ENCODE measurements at regions of chr6 and their contacts with region 1.

Region 1: DNA sequence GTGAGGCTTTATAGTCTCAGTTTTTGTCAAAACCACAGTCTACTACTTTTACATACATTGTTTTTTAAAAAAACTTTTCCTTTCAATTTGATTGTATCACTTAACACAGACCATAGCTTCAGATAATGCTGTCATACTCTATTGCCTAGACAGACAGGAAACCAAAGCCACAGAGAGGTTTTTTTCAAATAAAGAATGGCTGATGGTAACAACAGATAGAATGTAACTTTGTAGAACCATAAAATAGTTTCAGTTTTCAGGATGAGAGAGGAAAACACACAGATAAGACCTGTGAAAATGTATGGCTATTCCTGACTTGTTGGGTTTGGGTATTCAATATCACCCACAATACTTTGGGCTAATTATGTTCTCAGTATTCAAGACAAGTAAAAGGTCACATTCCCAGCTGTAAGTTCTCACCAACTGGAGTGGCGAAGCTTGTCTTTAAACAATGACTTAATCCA is 94.0 kb downstream of the ADGRG6 start:
- DNase-seq: peak in 3 of 14 experiments; percentile 78 to 87 (median 85)
- ATAC-seq: peak; percentile 92
- H3K4me3 ChIP-seq: peak overlapping the region; percentile 7
- H3K4me3 Mint-ChIP-seq: peak overlapping the region; percentile 42
- H3K27ac ChIP-seq: peak overlapping the region in 1 of 2 donors; percentile 79
- H3K27ac Mint-ChIP-seq: peak overlapping the region; percentile 92
- H3K4me1 ChIP-seq: peaks cover 3% of the 10 kb centered on the region
- H3K4me1 Mint-ChIP-seq: peaks cover 50% of the 10 kb centered on the region
- H3K27me3 ChIP-seq: no peaks in the 10 kb centered on the region
- H3K27me3 Mint-ChIP-seq: no peaks in the 10 kb centered on the region
- CTCF ChIP-seq: no peak

Region 2: GRCh38 chr6:142233945-142234682 is 161.7 kb before region 1 on chr6:
- CTCF ChIA-PET with region 1: no interaction called
- POLR2A ChIA-PET with region 1: no interaction called
- intact Hi-C with region 1: loop called in 1 of 2 experiments (anchors 2 kb)
- DNase-seq: no peak
- ATAC-seq: no peak
- H3K4me3 ChIP-seq: no peak overlapping the region
- H3K4me3 Mint-ChIP-seq: no peak overlapping the region
- H3K27ac ChIP-seq: no peak overlapping the region
- H3K27ac Mint-ChIP-seq: no peak overlapping the region
- H3K4me1 ChIP-seq: peaks cover 3% of the 10 kb centered on the region
- H3K4me1 Mint-ChIP-seq: peaks cover 18% of the 10 kb centered on the region
- H3K27me3 ChIP-seq: peaks cover 0 to 6% of the 10 kb centered on the region in 2 experiments
- H3K27me3 Mint-ChIP-seq: peaks cover 9% of the 10 kb centered on the region
- CTCF ChIP-seq: no peak

Region 3: DNA sequence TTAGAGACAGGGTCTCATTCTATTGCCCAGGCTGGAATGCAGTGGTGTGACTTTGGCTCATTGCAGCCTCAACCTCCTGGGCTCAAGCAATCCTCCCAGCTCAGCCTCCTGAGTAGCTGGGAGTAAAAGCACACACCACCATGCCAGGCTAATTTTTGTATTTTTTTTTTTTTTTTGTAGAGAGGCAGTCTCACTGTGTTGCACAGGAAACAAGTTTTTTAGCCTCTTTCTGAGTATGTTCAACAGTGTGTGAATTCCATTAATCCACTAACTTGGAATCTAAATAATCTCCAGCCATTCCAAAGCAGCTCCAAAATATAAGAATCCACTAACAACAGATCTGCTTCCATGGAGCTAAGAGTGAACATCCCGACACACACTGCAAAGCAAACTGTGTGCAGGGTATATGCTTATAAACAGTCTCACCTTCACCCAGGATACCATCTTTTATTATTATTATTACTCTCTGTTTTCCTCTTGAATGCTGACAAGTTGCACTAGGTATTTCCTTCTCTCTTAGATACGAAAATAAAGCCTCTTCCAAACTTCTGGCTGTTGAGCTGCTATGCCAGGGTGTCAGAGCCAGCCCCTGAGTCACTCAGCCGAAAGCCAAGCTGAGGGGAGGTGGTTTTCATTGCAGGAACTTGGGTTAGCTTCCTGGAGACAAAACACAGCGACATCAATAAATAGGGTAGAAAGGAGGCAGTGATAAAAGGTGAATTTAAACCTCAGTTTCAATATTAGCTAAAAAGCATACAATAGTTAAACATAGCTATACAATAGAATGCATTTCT is 284.3 kb after region 1 on chr6:
- CTCF ChIA-PET with region 1: no interaction called
- POLR2A ChIA-PET with region 1: no interaction called
- intact Hi-C with region 1: loop called in 1 of 2 experiments (anchors 10 kb)
- DNase-seq: peak in 10 of 14 experiments; percentile 11 to 71 (median 44)
- ATAC-seq: peak; percentile 86
- H3K4me3 ChIP-seq: no peak overlapping the region
- H3K4me3 Mint-ChIP-seq: peak overlapping the region; percentile 45
- H3K27ac ChIP-seq: no peak overlapping the region
- H3K27ac Mint-ChIP-seq: peak overlapping the region; percentile 34
- H3K4me1 ChIP-seq: peaks cover 6% of the 10 kb centered on the region
- H3K4me1 Mint-ChIP-seq: peaks cover 29% of the 10 kb centered on the region
- H3K27me3 ChIP-seq: no peaks in the 10 kb centered on the region
- H3K27me3 Mint-ChIP-seq: peaks cover 6% of the 10 kb centered on the region
- CTCF ChIP-seq: no peak

Region 4: GRCh38 chr6:143952947-143953701 is 1557.3 kb after region 1 on chr6:
- CTCF ChIA-PET with region 1: no interaction called
- POLR2A ChIA-PET with region 1: no interaction called
- intact Hi-C with region 1: no loop called
- DNase-seq: no peak
- ATAC-seq: no peak
- H3K4me3 ChIP-seq: no peak overlapping the region
- H3K4me3 Mint-ChIP-seq: no peak overlapping the region
- H3K27ac ChIP-seq: no peak overlapping the region
- H3K27ac Mint-ChIP-seq: no peak overlapping the region
- H3K4me1 ChIP-seq: no peaks in the 10 kb centered on the region
- H3K4me1 Mint-ChIP-seq: no peaks in the 10 kb centered on the region
- H3K27me3 ChIP-seq: no peaks in the 10 kb centered on the region
- H3K27me3 Mint-ChIP-seq: no peaks in the 10 kb centered on the region
- CTCF ChIP-seq: no peak